Activated CD4-positive, alpha-beta T cell treated with anti-CD3 and anti-CD28 coated beads for 36 hours (primary cell): ENCODE measurements at regions of chr9 and their contacts with region 1.

Region 1: DNA sequence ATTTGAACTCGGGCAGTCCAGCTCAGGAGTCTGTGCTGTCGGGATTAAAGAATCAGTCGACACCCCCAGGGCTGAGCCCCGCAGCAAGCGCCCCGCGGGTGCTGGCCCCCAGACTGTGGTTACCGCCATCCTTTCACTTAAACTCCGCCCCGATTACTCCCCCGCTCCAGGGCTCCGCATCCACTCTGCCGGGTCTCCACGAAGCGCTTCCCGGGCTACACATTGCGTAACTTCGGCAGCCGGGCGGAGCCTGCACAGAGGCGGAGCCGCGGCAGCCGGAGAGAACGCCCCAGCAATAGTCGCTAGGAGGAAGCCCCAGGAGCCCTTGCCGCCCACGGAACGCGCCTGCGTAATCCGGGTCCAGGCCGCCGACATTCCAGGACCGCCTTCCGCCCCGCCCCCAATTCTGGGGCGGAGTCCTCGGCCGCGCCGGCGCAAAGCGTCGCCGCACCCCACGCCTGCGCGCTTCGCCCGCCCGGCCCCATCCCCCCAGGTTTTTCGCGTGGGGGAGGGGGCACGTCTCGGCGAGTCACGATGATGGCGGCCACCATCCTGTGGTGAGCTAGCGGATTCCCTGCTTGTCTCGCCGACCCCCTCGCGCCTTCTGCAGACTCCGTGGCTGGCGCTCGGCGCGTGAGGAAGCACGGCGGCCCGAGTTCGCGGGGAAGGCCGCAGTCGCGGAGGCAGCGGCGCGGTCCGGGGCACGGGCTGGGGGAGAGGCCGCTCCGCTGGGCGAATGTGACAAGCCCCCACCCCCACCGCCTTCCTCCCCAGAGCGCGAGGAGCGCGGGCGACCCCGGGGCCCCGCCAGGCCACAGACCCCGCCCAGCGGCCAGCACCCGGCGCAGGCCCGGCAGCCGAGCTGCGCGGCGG is at the start of gene RAD23B:
- DNase-seq: peak; percentile 99
- ATAC-seq: peak; percentile 85
- H3K4me3 Mint-ChIP-seq: peak within 1 kb of the TSS; percentile 83
- H3K27ac Mint-ChIP-seq: peak within 1 kb of the TSS; percentile 89
- H3K4me1 Mint-ChIP-seq: peaks cover 37% of the 10 kb centered on the region
- H3K27me3 Mint-ChIP-seq: no peaks in the 10 kb centered on the region
- total RNA-seq, gene RAD23B: 114 to 188 TPM

Region 2: GRCh38 chr9:105694190-105694847 is 1588.7 kb before region 1 on chr9 and contains the start of gene TMEM38B:
- CTCF ChIA-PET with region 1: no interaction called
- POLR2A ChIA-PET with region 1: no interaction called
- intact Hi-C with region 1: loop called in 1 of 2 experiments (anchors 2 kb)
- DNase-seq: peak; percentile 88
- ATAC-seq: peak; percentile 85
- H3K4me3 Mint-ChIP-seq: peak within 1 kb of the TSS; percentile 76
- H3K27ac Mint-ChIP-seq: peak within 1 kb of the TSS; percentile 86
- H3K4me1 Mint-ChIP-seq: peaks cover 27% of the 10 kb centered on the region
- H3K27me3 Mint-ChIP-seq: peaks cover 15% of the 10 kb centered on the region
- total RNA-seq, gene TMEM38B: 14.5 to 24.8 TPM

Region 3: GRCh38 chr9:107213561-107214028 is 69.4 kb before region 1 on chr9:
- CTCF ChIA-PET with region 1: no interaction called
- POLR2A ChIA-PET with region 1: no interaction called
- intact Hi-C with region 1: loop called in 1 of 2 experiments (anchors 1 kb)
- DNase-seq: peak; percentile 41
- ATAC-seq: peak; percentile 99
- H3K4me3 Mint-ChIP-seq: no peak overlapping the region
- H3K27ac Mint-ChIP-seq: peak overlapping the region; percentile 11
- H3K4me1 Mint-ChIP-seq: peaks cover 14% of the 10 kb centered on the region
- H3K27me3 Mint-ChIP-seq: peaks cover 7% of the 10 kb centered on the region

Region 4: GRCh38 chr9:107299437-107299836 is 16.4 kb after region 1 on chr9:
- CTCF ChIA-PET with region 1: no interaction called
- POLR2A ChIA-PET with region 1: interaction called, 3 read pairs
- intact Hi-C with region 1: loop called in 1 of 2 experiments (anchors 1 kb)
- DNase-seq: no peak
- ATAC-seq: no peak
- H3K4me3 Mint-ChIP-seq: no peak overlapping the region
- H3K27ac Mint-ChIP-seq: no peak overlapping the region
- H3K4me1 Mint-ChIP-seq: peaks cover 36% of the 10 kb centered on the region
- H3K27me3 Mint-ChIP-seq: no peaks in the 10 kb centered on the region

Region 5: GRCh38 chr9:107340920-107341632 is 58.1 kb after region 1 on chr9:
- CTCF ChIA-PET with region 1: interaction called, 8 read pairs
- POLR2A ChIA-PET with region 1: no interaction called
- intact Hi-C with region 1: loop called (anchors 2 to 5 kb)
- DNase-seq: peak; percentile 92
- ATAC-seq: peak; percentile 90
- H3K4me3 Mint-ChIP-seq: no peak overlapping the region
- H3K27ac Mint-ChIP-seq: peak overlapping the region; percentile 74
- H3K4me1 Mint-ChIP-seq: peaks cover 8% of the 10 kb centered on the region
- H3K27me3 Mint-ChIP-seq: no peaks in the 10 kb centered on the region

Region 6: GRCh38 chr9:109110326-109111021 is 1827.5 kb after region 1 on chr9:
- CTCF ChIA-PET with region 1: no interaction called
- POLR2A ChIA-PET with region 1: no interaction called
- intact Hi-C with region 1: loop called in 1 of 2 experiments (anchors 5 kb)
- DNase-seq: no peak
- ATAC-seq: peak; percentile 64
- H3K4me3 Mint-ChIP-seq: peak overlapping the region; percentile 47
- H3K27ac Mint-ChIP-seq: peak overlapping the region; percentile 82
- H3K4me1 Mint-ChIP-seq: peaks cover 89% of the 10 kb centered on the region
- H3K27me3 Mint-ChIP-seq: no peaks in the 10 kb centered on the region